GM12878 (cell line): ENCODE measurements at regions of chr3 and their contacts with region 1.

Region 1: GRCh38 chr3:42247576-42248027 is 18.4 kb downstream of the CCK start:
- DNase-seq: no peak
- ATAC-seq: peak; percentile 80
- H3K4me3 ChIP-seq: no peak overlapping the region
- H3K27ac ChIP-seq: no peak overlapping the region
- H3K4me1 ChIP-seq: 0 out of 2 replicates have a peak, but pooled peaks cover 2% of the 10 kb centered on the region
- H3K27me3 ChIP-seq: no peaks in the 10 kb centered on the region
- CTCF ChIP-seq: peak; percentile 58 to 84 (median 77)
- EP300 ChIP-seq: no peak
- POLR2A ChIP-seq: no peak
- RAD21 ChIP-seq: peak; percentile 93

Region 2: DNA sequence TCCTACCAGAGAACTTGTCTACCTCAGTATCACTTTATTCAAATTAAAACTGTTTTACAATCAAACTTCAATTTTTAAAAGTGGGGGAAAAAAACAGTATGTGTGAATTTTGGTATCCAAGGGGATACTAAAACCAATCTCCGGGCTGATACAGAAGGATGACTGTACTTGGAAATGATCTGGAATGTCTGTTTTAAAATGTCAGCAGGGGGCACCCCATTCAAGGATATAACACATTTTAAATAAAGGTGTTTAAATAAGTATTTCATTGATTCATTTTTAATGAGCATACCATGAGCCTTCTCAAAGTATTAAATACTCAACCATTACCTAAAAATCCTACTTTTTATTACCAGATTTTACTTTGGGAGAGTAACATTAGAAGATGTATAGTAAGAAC is 353.6 kb before region 1 on chr3:
- CTCF ChIA-PET with region 1: interaction called, 4 read pairs
- POLR2A ChIA-PET with region 1: no interaction called
- RAD21 ChIA-PET with region 1: no interaction called
- SMC1A ChIA-PET with region 1: interaction called, 3 read pairs
- in situ Hi-C with region 1: no loop called
- intact Hi-C with region 1: loop called (anchors 5 kb)
- DNase-seq: no peak
- ATAC-seq: no peak
- H3K4me3 ChIP-seq: no peak overlapping the region
- H3K27ac ChIP-seq: no peak overlapping the region
- H3K4me1 ChIP-seq: no peaks in the 10 kb centered on the region
- H3K27me3 ChIP-seq: no peaks in the 10 kb centered on the region
- CTCF ChIP-seq: peak; percentile 18 to 49 (median 34); a peak in 3 of 6 replicates
- EP300 ChIP-seq: no peak
- POLR2A ChIP-seq: no peak
- RAD21 ChIP-seq: peak; percentile 70

Region 3: DNA sequence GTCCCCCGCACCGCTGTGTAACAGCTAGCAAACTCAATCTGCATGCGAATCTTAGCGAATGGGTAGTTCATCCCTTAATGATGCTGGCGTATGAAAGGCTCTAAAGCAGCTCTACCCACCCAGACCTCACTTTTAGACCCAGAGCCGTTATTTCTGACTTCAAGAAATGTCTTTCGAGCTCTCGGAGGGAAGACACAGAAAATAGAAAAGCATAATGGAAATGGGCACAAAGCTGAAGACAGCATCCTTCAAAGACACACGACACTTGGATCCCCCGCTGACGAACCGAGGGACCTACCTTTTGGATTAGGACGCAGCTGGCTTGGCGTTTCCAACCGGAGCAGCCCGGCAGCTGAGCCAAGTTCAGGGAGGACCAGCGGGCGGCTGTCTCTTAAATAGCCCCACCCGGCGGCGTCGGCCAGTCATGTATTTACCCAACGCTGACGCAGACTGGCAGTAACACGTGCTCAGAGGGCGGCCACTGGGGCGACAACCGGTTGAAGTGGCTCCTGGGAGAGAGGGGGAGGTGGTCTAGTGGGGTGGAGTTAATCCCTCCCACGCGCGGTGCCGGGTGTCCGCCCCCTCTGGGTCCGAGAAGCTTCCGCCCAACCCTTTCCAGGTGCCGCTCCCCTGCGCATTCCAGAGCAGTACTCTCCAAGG is 16.9 kb after region 1 on chr3:
- CTCF ChIA-PET with region 1: interaction called, 26 read pairs
- POLR2A ChIA-PET with region 1: no interaction called
- RAD21 ChIA-PET with region 1: no interaction called
- SMC1A ChIA-PET with region 1: interaction called, 18 read pairs
- in situ Hi-C with region 1: no loop called
- intact Hi-C with region 1: no loop called
- DNase-seq: no peak
- ATAC-seq: no peak
- H3K4me3 ChIP-seq: no peak overlapping the region
- H3K27ac ChIP-seq: no peak overlapping the region
- H3K4me1 ChIP-seq: no peaks in the 10 kb centered on the region
- H3K27me3 ChIP-seq: peaks cover 3 to 18% of the 10 kb centered on the region in 2 experiments; a peak in 3 of 4 replicates
- CTCF ChIP-seq: no peak
- EP300 ChIP-seq: no peak
- POLR2A ChIP-seq: no peak
- RAD21 ChIP-seq: no peak

Region 4: DNA sequence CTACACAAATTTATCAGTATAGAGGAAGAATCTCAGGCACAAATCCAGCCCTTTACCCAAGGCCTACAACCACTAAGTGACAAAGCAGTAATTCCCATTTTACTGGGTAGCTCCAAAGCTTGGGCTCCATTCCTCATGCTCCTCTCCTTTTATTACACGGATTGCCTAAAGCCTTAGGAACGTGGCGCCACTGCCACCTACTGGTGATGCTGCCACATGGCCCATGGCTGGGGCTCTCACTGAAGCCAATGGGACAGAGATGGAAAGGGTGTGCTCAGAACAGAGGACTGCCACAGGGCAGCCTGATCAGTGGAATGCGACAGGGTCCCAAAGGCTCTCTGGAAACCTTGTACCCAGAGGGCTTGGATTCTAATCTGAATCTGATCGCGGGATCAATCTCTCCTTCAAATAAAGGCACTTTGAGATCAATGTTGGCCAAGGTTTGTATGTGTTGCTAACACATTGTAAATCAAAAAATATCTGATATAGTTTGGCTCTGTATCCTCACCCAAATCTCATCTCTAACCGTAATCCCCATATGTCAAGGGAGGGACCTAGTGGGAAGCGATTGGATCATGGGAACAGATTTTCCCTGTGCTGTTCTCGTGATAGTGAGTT is 196.3 kb after region 1 on chr3:
- CTCF ChIA-PET with region 1: interaction called, 162 read pairs
- POLR2A ChIA-PET with region 1: no interaction called
- RAD21 ChIA-PET with region 1: interaction called, 90 read pairs
- SMC1A ChIA-PET with region 1: interaction called, 110 read pairs
- in situ Hi-C with region 1: loop called (anchors 5 kb)
- intact Hi-C with region 1: loop called (anchors 1 kb)
- DNase-seq: peak; percentile 30
- ATAC-seq: peak; percentile 99
- H3K4me3 ChIP-seq: no peak overlapping the region
- H3K27ac ChIP-seq: no peak overlapping the region
- H3K4me1 ChIP-seq: no peaks in the 10 kb centered on the region; the same call in 1 of the 2 replicates
- H3K27me3 ChIP-seq: no peaks in the 10 kb centered on the region; a peak in 1 of 4 replicates
- CTCF ChIP-seq: peak; percentile 93 to 97 (median 95)
- EP300 ChIP-seq: no peak
- POLR2A ChIP-seq: no peak
- RAD21 ChIP-seq: peak; percentile 95

Region 5: DNA sequence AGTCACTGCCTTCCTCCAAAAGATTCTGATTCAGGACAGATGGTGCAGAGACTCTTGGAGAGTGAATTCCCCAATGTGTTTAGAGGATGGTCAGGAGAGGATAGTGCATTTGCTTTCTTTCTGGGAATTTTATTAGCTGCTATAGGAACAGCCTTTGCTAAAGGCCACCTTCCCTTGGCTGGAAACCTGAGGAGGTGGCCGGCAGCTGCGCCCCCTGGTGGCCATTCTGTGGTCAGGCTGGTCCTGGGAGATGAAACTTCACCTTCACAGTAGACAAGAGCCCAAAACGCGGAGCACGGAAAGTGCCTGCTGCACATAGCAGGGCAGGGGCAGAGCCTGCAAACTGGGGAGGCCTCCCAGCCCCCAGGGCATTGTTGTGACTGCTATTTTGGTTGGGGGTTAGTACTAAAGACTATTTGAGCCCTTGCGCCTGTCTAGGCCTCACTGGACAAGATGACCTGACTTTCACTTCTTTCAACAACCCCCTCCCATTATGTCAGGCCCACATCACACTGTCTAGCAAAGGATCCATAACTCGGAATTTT is 299.9 kb after region 1 on chr3:
- CTCF ChIA-PET with region 1: interaction called, 32 read pairs
- POLR2A ChIA-PET with region 1: no interaction called
- RAD21 ChIA-PET with region 1: interaction called, 6 read pairs
- SMC1A ChIA-PET with region 1: interaction called, 19 read pairs
- in situ Hi-C with region 1: no loop called
- intact Hi-C with region 1: no loop called
- DNase-seq: no peak
- ATAC-seq: peak; percentile 91
- H3K4me3 ChIP-seq: no peak overlapping the region
- H3K27ac ChIP-seq: no peak overlapping the region
- H3K4me1 ChIP-seq: no peaks in the 10 kb centered on the region
- H3K27me3 ChIP-seq: no peaks in the 10 kb centered on the region
- CTCF ChIP-seq: peak; percentile 83 to 97 (median 90)
- EP300 ChIP-seq: no peak
- POLR2A ChIP-seq: no peak
- RAD21 ChIP-seq: peak; percentile 45

Region 6: DNA sequence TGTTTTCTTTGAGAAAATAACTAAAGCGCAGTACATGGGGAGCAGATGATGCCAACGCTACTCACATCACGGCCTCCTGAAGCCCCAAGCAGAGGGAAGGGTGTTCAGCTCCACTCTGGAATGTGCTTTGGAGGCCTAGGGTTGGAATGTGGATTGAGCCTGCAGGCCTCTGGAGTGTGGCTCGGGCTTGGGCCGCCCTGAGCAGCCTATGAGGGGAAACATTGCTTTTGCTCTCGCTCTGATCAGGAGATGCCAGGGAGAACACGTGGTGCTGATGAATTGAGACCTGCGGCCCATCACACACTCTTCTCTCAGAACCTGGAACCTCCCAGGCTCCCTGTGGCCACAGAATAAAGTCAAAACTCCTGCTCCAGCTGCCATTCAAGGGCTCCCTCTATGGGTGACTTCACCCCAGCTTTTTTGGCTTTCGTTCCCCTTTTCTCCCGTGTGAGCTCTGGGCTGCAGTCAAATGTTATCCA is 502.2 kb after region 1 on chr3:
- CTCF ChIA-PET with region 1: interaction called, 6 read pairs
- POLR2A ChIA-PET with region 1: no interaction called
- RAD21 ChIA-PET with region 1: no interaction called
- SMC1A ChIA-PET with region 1: no interaction called
- in situ Hi-C with region 1: no loop called
- intact Hi-C with region 1: loop called (anchors 1 kb)
- DNase-seq: no peak
- ATAC-seq: peak; percentile 59
- H3K4me3 ChIP-seq: no peak overlapping the region
- H3K27ac ChIP-seq: no peak overlapping the region
- H3K4me1 ChIP-seq: no peaks in the 10 kb centered on the region
- H3K27me3 ChIP-seq: no peaks in the 10 kb centered on the region
- CTCF ChIP-seq: peak; percentile 43 to 54 (median 53); a peak in 5 of 6 replicates
- EP300 ChIP-seq: no peak
- POLR2A ChIP-seq: no peak
- RAD21 ChIP-seq: peak; percentile 46